ENCODE measurements at regions of chr5 and their contacts with region 1.

Region 1: DNA sequence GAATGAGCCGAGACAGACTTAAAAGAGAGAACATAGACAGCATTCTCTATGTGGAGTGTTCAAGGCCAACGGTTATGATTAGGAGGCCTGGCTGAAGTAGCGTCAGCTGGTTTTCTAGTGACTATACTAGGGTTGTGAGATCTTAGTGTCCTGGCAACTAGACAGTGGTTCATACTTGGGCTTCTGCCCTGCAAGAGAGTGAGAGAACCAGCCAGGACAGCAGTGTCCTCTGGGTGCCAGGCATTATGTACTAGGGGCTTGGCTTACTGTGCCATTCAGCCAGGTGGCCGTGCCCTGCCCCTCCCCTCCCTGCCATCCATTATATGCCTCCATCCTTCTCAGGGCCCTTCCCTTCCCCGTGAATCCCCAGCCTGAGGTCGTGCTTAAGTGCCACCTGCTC is 56.8 kb downstream of the TRIO start:
- DNase-seq: peak; percentile 47 to 62 (median 56)
- ATAC-seq: peak; percentile 91 to 96 (median 93)
- H3K4me3 ChIP-seq: no peak overlapping the region
- H3K27ac ChIP-seq: peak overlapping the region in 10 of 12 donors; percentile 29 to 70 (median 54)
- H3K4me1 ChIP-seq: peaks cover 12 to 81% (median 51%) of the 10 kb centered on the region in 12 donors
- H3K27me3 ChIP-seq: no peaks in the 10 kb centered on the region
- CTCF ChIP-seq: no peak
- POLR2A ChIP-seq: no peak

Region 2: GRCh38 chr5:14165375-14166091 is 34.4 kb before region 1 on chr5:
- intact Hi-C with region 1: no loop called
- DNase-seq: no peak
- ATAC-seq: peak in 3 of 4 donors; percentile 35 to 73 (median 39)
- H3K4me3 ChIP-seq: no peak overlapping the region
- H3K27ac ChIP-seq: peak overlapping the region in 1 of 12 donors; percentile 49
- H3K4me1 ChIP-seq: peaks cover 5 to 75% (median 43%) of the 10 kb centered on the region in 12 donors
- H3K27me3 ChIP-seq: no peaks in the 10 kb centered on the region
- CTCF ChIP-seq: no peak
- POLR2A ChIP-seq: no peak

Region 3: DNA sequence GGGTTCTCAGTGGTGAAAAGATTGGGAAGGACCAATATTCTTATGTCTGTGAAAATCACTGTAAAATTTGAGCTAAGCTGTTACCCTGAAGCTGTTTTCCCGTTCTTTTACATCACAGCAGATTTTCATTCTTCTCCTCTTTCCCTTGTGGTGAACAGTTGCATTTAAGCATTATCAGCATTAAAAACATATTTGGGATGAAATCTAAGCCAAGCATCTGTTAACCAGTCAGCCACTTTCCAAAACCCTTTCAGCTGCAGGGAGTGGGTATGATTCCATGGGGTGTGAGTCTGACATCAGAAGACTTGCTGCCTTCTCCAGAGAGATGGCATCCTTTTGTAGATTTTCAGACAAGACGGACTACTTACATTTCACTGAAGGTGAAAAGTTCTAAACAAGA is 40.5 kb after region 1 on chr5:
- intact Hi-C with region 1: no loop called
- DNase-seq: no peak
- ATAC-seq: no peak
- H3K4me3 ChIP-seq: no peak overlapping the region
- H3K27ac ChIP-seq: no peak overlapping the region
- H3K4me1 ChIP-seq: peaks cover 0 to 62% (median 29%) of the 10 kb centered on the region in 12 donors
- H3K27me3 ChIP-seq: no peaks in the 10 kb centered on the region
- CTCF ChIP-seq: no peak
- POLR2A ChIP-seq: no peak

Region 4: DNA sequence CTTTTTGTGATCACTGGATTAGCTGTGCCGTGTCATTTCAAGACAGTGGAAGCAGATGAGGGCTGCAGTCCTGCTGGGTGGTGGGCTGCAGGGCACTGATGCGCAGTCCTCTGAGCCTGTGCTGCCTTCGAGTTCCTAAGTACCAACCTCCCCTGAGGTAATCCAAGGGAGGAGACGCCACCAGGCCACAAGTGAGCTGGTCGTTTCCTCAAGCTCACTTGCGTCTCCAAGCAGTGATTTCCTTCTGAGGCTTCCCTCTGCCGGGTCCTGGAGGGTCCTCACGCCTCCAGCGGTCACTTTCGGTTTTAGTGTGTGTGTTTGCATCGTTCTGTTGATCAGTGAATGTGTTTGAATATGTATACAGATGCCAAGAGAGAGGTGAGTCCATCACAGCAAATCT is 58.9 kb after region 1 on chr5:
- intact Hi-C with region 1: loop called in 4 of 10 experiments (anchors 5 to 10 kb)
- DNase-seq: no peak
- ATAC-seq: peak; percentile 16 to 58 (median 32)
- H3K4me3 ChIP-seq: peak overlapping the region in 3 of 12 donors; percentile 3 to 7 (median 4)
- H3K27ac ChIP-seq: peak overlapping the region in 10 of 12 donors; percentile 13 to 71 (median 24)
- H3K4me1 ChIP-seq: peaks cover 0 to 70% (median 53%) of the 10 kb centered on the region in 12 donors
- H3K27me3 ChIP-seq: no peaks in the 10 kb centered on the region
- CTCF ChIP-seq: peak in 6 of 12 donors; percentile 13 to 44 (median 26)
- POLR2A ChIP-seq: no peak

Region 5: DNA sequence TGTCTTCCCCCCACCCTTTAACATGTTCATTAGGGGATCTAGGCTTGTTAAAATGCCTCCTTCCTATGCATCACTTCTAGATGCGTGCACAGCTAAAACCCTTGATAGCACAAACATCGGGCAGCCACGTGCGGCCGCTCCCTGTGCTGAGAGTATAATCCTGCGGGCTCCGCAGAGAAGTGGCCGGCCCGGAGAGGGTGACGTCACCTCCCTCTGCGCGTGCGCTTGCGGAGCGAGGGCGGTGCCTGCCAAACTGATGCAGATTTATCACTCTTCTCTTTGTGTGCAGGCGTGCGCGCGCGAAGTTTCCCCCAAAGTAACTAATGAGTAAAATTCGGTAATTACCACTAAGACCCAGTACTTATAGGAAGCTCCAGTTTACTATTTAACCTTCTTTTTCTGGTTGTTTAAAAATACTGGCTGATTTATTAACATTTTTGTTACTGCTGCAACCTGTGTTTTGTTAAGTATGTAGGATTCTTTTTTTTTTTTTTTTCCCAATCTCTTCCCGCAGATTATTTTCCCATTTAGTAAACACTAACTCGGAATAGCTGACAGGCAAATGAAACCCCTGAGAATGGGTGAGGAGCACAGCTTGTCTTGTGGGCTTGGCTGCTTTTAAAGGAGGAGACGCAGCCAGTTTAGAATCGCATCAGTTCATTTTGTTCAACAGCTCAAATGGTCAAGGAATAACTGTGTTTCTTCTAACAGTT is 64.9 kb after region 1 on chr5:
- intact Hi-C with region 1: loop called in 4 of 10 experiments (anchors 5 to 10 kb)
- DNase-seq: peak; percentile 89 to 95 (median 93)
- ATAC-seq: peak; percentile 89 to 95 (median 94)
- H3K4me3 ChIP-seq: peak overlapping the region in 9 of 12 donors; percentile 4 to 45 (median 27)
- H3K27ac ChIP-seq: peak overlapping the region in 6 of 12 donors; percentile 1 to 38 (median 10)
- H3K4me1 ChIP-seq: peaks cover 12 to 73% (median 49%) of the 10 kb centered on the region in 12 donors
- H3K27me3 ChIP-seq: no peaks in the 10 kb centered on the region
- CTCF ChIP-seq: no peak
- POLR2A ChIP-seq: peak in 1 of 2 donors; percentile 28

Region 6: GRCh38 chr5:14560091-14560595 is 360.2 kb after region 1 on chr5:
- intact Hi-C with region 1: no loop called
- DNase-seq: no peak
- ATAC-seq: no peak
- H3K4me3 ChIP-seq: no peak overlapping the region
- H3K27ac ChIP-seq: no peak overlapping the region
- H3K4me1 ChIP-seq: peaks cover 0 to 22% (median 0%) of the 10 kb centered on the region in 12 donors
- H3K27me3 ChIP-seq: peaks cover 0 to 10% (median 0%) of the 10 kb centered on the region in 9 donors
- CTCF ChIP-seq: no peak
- POLR2A ChIP-seq: no peak

Measured in heart left ventricle (tissue), 16 donors.